ENCODE measurements at regions of chr1 and their contacts with region 1.

Region 1: GRCh38 chr1:111565079-111565478 is 54.5 kb upstream of the RAP1A start:
- DNase-seq: peak in 7 of 10 donors; percentile 35 to 71 (median 50)
- H3K4me3 ChIP-seq: no peak overlapping the region
- H3K27ac ChIP-seq: peak overlapping the region in 58 of 59 donors; percentile 2 to 93 (median 76)
- H3K27me3 ChIP-seq: no peaks in the 10 kb centered on the region
- CTCF ChIP-seq: peak in 2 of 56 donors; percentile 11 to 23

Region 2: GRCh38 chr1:111372336-111372965 is 192.6 kb before region 1 on chr1:
- intact Hi-C with region 1: no loop called
- DNase-seq: peak in 6 of 10 donors; percentile 9 to 65 (median 36)
- H3K4me3 ChIP-seq: no peak overlapping the region
- H3K27ac ChIP-seq: no peak overlapping the region
- H3K27me3 ChIP-seq: peaks cover 0 to 33% (median 3%) of the 10 kb centered on the region in 45 donors
- CTCF ChIP-seq: no peak

Region 3: GRCh38 chr1:111516005-111516535 is 49.0 kb before region 1 on chr1:
- intact Hi-C with region 1: loop called (anchors 1 to 5 kb)
- DNase-seq: peak in 3 of 10 donors; percentile 44 to 50 (median 49)
- H3K4me3 ChIP-seq: peak overlapping the region; percentile 0 to 68 (median 52)
- H3K27ac ChIP-seq: peak overlapping the region in 53 of 59 donors; percentile 12 to 91 (median 77)
- H3K27me3 ChIP-seq: no peaks in the 10 kb centered on the region
- CTCF ChIP-seq: peak in 31 of 56 donors; percentile 8 to 41 (median 21)

Region 4: DNA sequence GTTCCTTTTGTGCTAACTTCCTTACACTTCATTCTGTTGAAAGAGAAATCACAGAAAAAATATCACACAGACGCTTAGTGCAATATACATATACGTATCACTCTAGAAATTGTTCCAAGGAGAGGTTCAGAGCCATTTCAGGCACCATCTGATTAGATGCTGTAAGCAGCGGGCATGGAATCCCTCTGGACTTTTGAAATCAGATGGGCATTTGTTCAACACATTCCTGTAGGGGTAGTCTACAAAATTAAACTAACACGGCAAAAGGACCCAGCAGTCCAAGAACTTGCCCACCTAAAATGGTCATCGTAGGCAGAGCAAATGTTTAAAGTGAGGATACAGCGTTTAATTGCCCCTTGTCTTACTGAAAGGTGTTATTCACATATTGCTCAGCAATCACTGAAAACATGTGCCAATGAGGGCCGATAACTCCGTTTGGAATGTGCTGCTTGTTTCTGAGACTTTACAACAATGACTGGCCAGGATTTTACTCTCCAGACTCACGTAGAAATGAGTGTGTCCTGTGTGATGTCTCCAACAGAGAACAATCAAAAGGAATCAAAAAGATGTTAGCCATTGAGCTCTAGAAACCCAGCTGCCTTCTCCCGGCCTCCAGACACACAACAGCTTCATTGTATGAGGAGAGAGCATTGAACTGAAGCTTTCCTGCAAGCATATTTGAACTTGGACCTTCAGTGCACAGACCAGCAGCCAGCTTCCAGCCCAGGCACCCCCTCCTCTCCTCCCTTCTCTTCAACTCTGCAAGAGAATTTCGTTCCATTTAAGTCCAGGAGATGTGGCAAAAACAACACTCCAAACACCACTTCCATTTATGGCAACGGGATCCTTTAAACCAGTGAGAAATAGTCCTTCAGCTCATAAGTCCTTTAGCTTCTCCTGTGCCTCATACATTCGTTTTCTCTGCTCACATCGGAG is 29.6 kb before region 1 on chr1:
- intact Hi-C with region 1: loop called in 1 of 2 experiments (anchors 2 kb)
- DNase-seq: peak in 4 of 10 donors; percentile 17 to 60 (median 58)
- H3K4me3 ChIP-seq: peak overlapping the region in 32 of 59 donors; percentile 2 to 51 (median 22)
- H3K27ac ChIP-seq: peak overlapping the region in 30 of 59 donors; percentile 4 to 83 (median 41)
- H3K27me3 ChIP-seq: peaks cover 0 to 4% (median 0%) of the 10 kb centered on the region in 45 donors
- CTCF ChIP-seq: peak in 1 of 56 donors; percentile 9

Region 5: GRCh38 chr1:111619635-111620440 is 54.8 kb after region 1 on chr1 and contains the start of gene RAP1A:
- intact Hi-C with region 1: loop called in 1 of 2 experiments (anchors 5 kb)
- DNase-seq: peak; percentile 89 to 96 (median 93)
- H3K4me3 ChIP-seq: peak within 1 kb of the TSS; percentile 54 to 97 (median 90)
- H3K27ac ChIP-seq: peak within 1 kb of the TSS; percentile 57 to 98 (median 94)
- H3K27me3 ChIP-seq: no peaks in the 10 kb centered on the region
- CTCF ChIP-seq: peak in 6 of 56 donors; percentile 3 to 24 (median 14)
- total RNA-seq, gene RAP1A: 40.2 to 95.0 (median 58.6) TPM

Measured in dorsolateral prefrontal cortex (tissue), 120 donors.